ENCODE measurements at regions of chr1 and their contacts with region 1.

Region 1: DNA sequence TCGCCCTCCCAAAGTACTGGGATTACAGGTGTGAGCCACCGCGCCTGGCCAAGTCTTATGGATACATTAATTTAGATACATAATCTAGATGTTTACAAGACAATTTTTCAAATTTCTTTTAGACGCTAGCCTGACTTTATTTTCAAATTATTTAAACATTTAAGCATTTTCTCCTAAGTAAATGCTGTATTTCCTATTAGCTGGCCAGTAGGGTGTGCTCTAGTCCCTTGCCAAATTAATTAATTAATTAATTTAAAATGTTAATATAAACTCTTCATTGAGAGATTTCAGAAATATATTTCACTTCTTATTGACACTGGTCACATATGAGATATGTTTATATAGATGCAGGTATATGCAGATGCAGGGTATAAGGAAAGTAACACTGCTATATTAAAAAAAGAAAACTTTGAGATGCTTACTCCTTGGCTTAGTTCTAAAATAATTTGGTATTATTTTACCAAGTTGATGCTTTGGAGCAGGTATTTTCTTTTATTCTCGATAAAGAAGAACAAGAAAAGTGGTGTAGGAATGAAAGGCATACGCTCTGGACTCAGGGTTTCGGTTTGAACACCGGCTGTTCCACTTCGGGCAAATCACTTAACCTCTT is 5.2 kb upstream of the ERRFI1 start:
- DNase-seq: peak in 1 of 2 donors; percentile 22
- H3K4me3 ChIP-seq: no peak overlapping the region
- H3K27ac ChIP-seq: no peak overlapping the region
- H3K4me1 ChIP-seq: peaks cover 25 to 32% of the 10 kb centered on the region in 2 donors
- H3K27me3 ChIP-seq: no peaks in the 10 kb centered on the region
- CTCF ChIP-seq: peak in 5 of 6 experiments; percentile 36 to 88 (median 69)
- POLR2A ChIP-seq: no peak

Region 2: DNA sequence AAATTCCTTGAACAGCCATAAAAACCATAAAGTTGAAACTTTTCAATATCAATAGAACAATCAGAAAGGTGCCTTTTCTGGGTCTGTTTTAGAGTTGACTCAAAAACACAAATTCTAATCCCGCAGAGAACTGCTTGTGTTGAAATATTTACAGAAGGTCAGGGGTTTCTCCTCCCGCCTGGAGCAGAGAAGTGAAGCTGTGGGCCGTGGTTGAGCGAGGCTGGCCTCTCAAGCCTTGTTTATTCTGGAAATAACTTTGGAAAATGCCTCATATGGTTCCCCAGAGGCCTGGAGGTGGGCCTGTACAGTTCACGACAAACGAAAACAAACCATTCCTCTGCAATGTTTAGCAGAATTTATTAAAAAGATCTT is 85.6 kb after region 1 on chr1:
- intact Hi-C with region 1: loop called (anchors 10 kb)
- DNase-seq: peak; percentile 77 to 82
- H3K4me3 ChIP-seq: no peak overlapping the region
- H3K27ac ChIP-seq: peak overlapping the region; percentile 93 to 98 (median 94)
- H3K4me1 ChIP-seq: peaks cover 50 to 69% of the 10 kb centered on the region in 2 donors
- H3K27me3 ChIP-seq: no peaks in the 10 kb centered on the region
- CTCF ChIP-seq: no peak
- POLR2A ChIP-seq: peak in 1 of 2 donors; percentile 37

Region 3: GRCh38 chr1:8238851-8239305 is 207.6 kb after region 1 on chr1:
- intact Hi-C with region 1: loop called (anchors 10 kb)
- DNase-seq: peak; percentile 61 to 66
- H3K4me3 ChIP-seq: no peak overlapping the region
- H3K27ac ChIP-seq: peak overlapping the region in 2 of 3 donors; percentile 40 to 58
- H3K4me1 ChIP-seq: peaks cover 0 to 17% of the 10 kb centered on the region in 2 donors
- H3K27me3 ChIP-seq: no peaks in the 10 kb centered on the region
- CTCF ChIP-seq: peak in 2 of 6 experiments; percentile 25 to 37
- POLR2A ChIP-seq: no peak

Region 4: GRCh38 chr1:8314346-8315280 is 283.3 kb after region 1 on chr1:
- intact Hi-C with region 1: loop called (anchors 5 kb)
- DNase-seq: peak; percentile 81 to 88
- H3K4me3 ChIP-seq: no peak overlapping the region
- H3K27ac ChIP-seq: no peak overlapping the region
- H3K4me1 ChIP-seq: peaks cover 9 to 33% of the 10 kb centered on the region in 2 donors
- H3K27me3 ChIP-seq: no peaks in the 10 kb centered on the region
- CTCF ChIP-seq: peak; percentile 78 to 99 (median 94)
- POLR2A ChIP-seq: no peak